Spleen (tissue), 13 donors: ENCODE measurements at regions of chr20 and their contacts with region 1.

Region 1: GRCh38 chr20:1313236-1313964 is 15.5 kb downstream of the SDCBP2 start:
- DNase-seq: peak; percentile 90
- H3K4me3 ChIP-seq: peak overlapping the region in 1 of 8 donors; percentile 48
- H3K27ac ChIP-seq: peak overlapping the region in 3 of 8 donors; percentile 31 to 59 (median 55)
- H3K4me1 ChIP-seq: peaks cover 6 to 21% (median 10%) of the 10 kb centered on the region in 6 donors
- H3K27me3 ChIP-seq: no peaks in the 10 kb centered on the region
- CTCF ChIP-seq: peak; percentile 90 to 98 (median 96)
- POLR2A ChIP-seq: no peak

Region 2: DNA sequence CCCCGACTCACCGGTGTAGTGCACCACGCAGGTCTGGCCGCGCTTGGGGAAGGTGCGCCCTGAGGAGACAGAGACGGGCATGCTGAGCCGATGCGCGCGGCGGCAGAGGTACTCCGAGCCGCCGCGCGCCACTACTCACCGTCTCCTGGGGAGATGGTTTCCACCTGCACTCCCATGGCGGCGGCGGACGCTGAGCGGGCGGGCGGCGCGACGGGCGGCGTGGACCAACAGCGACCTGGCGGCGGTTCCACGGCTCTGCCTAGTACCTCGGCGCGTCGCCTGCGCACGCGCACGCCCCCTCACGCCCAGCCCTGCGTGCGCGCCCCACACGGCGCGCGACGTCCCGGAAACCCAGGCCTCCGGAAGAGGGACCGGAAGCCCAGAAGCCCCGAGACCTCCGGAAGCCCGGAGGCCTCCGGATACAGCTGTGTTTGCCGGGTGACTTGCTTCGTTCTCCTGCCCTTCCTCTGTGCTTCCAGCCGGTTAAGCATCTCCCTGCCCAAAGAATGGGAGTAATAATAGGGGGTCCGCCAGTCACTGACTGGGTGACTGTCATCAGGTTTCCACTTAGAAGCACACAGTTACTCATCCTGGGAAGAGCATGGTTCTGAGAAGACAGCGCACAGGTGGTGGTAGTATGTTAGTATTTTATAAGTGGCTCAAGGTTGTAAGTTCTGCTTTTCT is 79.6 kb after region 1 on chr20 and contains the start of gene FKBP1A:
- intact Hi-C with region 1: loop called (anchors 5 kb)
- DNase-seq: peak; percentile 97
- H3K4me3 ChIP-seq: peak within 1 kb of the TSS; percentile 71 to 99 (median 94)
- H3K27ac ChIP-seq: peak within 1 kb of the TSS; percentile 75 to 97 (median 92)
- H3K4me1 ChIP-seq: peaks cover 42 to 94% (median 72%) of the 10 kb centered on the region in 6 donors
- H3K27me3 ChIP-seq: no peaks in the 10 kb centered on the region
- CTCF ChIP-seq: peak in 9 of 11 experiments; percentile 4 to 58 (median 41)
- POLR2A ChIP-seq: peak in 1 of 3 donors; percentile 64
- total RNA-seq, gene FKBP1A: 167 to 338 (median 260) TPM

Region 3: GRCh38 chr20:1438361-1438760 is 125.0 kb after region 1 on chr20:
- intact Hi-C with region 1: loop called (anchors 2 kb)
- DNase-seq: no peak
- H3K4me3 ChIP-seq: no peak overlapping the region
- H3K27ac ChIP-seq: no peak overlapping the region
- H3K4me1 ChIP-seq: peaks cover 15 to 48% (median 27%) of the 10 kb centered on the region in 6 donors
- H3K27me3 ChIP-seq: peaks cover 0 to 5% (median 0%) of the 10 kb centered on the region in 7 donors
- CTCF ChIP-seq: no peak
- POLR2A ChIP-seq: no peak